Vagina (tissue), 2 donors: ENCODE measurements at regions of chr16 and their contacts with region 1.

Region 1: DNA sequence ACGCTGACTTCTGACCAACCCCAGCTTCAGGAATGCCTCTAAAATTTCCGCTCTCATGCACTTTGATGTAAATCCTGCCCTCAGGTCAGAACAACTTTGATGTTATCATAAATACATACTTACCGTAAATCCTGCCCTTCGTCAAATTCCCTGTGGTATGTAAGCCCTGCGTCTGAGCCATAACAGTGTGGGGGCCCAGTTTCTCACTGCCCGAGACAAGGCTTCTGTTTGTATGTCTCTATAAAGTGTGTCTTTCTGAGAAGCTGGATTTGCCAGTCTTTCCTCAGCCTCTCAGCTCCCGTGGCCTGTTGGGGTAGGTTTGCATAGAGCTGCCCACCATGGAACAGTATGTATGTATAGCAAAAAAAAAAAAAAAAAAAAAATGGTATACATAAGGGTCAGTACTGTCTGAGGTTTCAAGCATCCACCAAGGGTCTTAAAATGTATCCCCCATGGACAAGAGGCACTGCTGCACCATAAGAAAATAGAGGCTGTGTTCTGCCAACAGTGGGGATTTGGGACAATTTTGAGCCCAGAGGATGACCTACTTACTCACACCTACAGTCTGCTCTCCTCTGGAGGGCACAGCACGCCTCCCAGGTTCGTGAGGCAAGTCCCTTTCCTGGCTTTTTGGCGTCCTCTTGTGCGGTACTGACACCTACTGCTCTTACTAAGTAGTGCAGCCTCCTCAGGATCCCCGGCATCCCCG is 17.5 kb downstream of the PRMT7 start:
- DNase-seq: no peak
- H3K4me3 ChIP-seq: no peak overlapping the region
- H3K27ac ChIP-seq: no peak overlapping the region
- H3K4me1 ChIP-seq: no peaks in the 10 kb centered on the region
- H3K27me3 ChIP-seq: no peaks in the 10 kb centered on the region
- CTCF ChIP-seq: peak; percentile 50 to 91 (median 88)
- POLR2A ChIP-seq: no peak

Region 2: GRCh38 chr16:68264128-68265077 is 63.9 kb before region 1 on chr16 and contains the start of gene SLC7A6:
- intact Hi-C with region 1: loop called (anchors 5 kb)
- DNase-seq: no peak
- H3K4me3 ChIP-seq: peak within 1 kb of the TSS; percentile 71 to 93
- H3K27ac ChIP-seq: peak within 1 kb of the TSS; percentile 99
- H3K4me1 ChIP-seq: peaks cover 50% of the 10 kb centered on the region
- H3K27me3 ChIP-seq: no peaks in the 10 kb centered on the region
- CTCF ChIP-seq: peak; percentile 29 to 52 (median 48)
- POLR2A ChIP-seq: peak in 1 of 2 donors; percentile 73
- total RNA-seq, gene SLC7A6: 35.1 TPM

Region 3: DNA sequence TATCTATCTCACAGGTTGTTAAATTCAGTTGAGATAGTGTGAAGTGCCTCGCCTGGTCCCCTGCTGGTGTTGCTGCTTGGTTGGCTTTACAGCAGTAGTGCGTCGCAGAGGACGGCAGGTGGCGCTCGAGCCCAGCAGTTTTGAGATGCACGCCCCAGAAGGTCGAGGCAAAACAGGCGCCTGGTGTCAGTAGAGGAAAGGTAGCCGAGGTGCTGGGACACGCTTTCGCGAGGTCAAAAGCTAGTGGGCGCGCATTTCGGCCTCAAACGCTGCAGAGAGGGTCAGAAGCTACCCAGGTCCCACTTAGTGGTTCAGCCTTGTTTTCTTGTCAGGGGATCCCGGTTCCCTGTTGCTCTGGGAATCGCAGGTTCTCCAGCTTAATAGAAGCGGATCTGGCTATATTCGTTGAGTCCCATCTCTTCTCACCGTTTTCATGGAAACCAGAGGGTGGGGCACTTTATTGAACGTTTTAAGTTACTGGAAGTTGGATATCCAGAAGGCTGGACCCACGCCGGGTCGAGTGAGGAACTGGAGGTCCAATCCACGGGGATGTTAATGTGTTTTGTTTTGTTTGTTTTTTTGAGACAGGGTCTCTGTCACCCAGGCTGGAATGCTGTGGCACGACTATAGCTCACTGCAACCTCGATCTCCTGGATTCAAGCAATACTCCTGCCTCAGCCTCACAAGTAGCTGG is 200.5 kb after region 1 on chr16:
- intact Hi-C with region 1: no loop called
- DNase-seq: no peak
- H3K4me3 ChIP-seq: no peak overlapping the region
- H3K27ac ChIP-seq: no peak overlapping the region
- H3K4me1 ChIP-seq: peaks cover 22% of the 10 kb centered on the region
- H3K27me3 ChIP-seq: no peaks in the 10 kb centered on the region
- CTCF ChIP-seq: peak; percentile 82 to 96 (median 83)
- POLR2A ChIP-seq: no peak